Endothelial cell of umbilical vein (primary cell): ENCODE measurements at regions of chr11 and their contacts with region 1.

Region 1: DNA sequence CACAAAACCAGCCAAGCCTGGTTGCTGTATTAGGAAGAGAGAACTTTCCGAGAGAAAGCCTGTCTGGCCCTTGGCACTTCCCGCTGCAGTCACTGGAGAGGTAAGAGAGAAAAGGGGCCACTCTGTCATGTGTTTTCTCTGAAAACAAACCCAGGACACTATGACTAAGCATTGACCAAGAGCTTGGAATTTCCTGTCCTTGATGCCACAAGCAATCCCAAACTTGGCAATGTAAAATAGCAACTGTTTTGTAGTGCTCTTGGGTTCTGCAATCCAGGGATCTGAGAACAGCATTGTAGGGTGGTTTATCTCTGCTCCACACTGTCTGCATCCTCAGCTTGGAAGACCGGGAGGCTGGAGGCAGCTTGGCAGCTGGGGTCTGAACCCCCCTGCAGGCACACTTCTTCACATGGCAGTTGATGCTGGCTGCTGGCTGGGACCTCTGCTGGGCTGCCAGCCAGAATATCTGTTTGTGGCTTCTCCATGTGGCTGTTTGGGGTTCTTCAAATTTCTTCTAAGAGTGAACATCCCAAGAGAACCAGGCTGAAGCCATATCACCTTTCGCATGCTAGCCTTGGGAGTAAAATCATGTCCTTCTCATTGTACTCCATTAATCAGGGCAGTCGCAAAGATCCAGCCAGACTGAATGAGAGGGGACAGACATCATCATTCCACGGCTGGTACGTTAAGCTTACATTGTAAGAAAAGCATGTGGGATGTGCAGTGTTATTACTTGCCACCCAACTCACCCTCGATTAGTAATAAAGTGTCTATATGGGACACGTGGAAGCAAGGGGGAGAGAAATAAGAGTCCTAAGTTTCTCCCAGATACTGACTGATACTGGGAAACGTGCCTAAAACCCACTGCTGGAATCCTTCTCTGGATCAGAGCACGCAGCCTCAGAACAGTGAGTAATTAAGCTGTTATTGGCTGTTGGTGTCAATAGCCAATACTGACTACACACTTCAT is 537.4 kb upstream of the B3GAT1 start:
- DNase-seq: peak; percentile 91
- H3K4me3 ChIP-seq: no peak overlapping the region
- H3K27ac ChIP-seq: peak overlapping the region; percentile 89
- H3K4me1 ChIP-seq: peaks cover 27% of the 10 kb centered on the region
- H3K27me3 ChIP-seq: no peaks in the 10 kb centered on the region
- CTCF ChIP-seq: no peak
- POLR2A ChIP-seq: no peak

Region 2: DNA sequence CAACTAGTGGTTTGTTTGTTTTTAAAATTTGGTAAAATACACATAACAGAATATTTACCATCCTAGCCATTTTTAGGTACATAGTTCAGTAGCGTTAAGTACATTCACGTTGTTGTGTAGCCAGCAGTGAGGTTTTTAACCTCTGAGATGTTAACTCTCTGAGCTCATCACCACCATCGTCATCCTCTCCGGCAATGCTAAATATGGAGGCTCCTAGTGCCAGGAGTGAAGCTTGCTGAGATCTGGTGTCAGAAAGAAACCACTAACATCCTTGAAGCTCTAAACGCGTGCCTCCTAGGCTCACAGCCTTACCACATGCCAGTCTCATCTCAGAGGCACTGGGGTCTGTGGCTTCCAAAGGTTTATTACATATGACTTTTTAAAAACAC is 207.2 kb before region 1 on chr11:
- CTCF ChIA-PET with region 1: no interaction called
- POLR2A ChIA-PET with region 1: no interaction called
- dilution Hi-C with region 1: no loop called
- intact Hi-C with region 1: loop called (anchors 2 kb)
- DNase-seq: peak; percentile 4
- H3K4me3 ChIP-seq: no peak overlapping the region
- H3K27ac ChIP-seq: peak overlapping the region; percentile 61
- H3K4me1 ChIP-seq: peaks cover 25% of the 10 kb centered on the region
- H3K27me3 ChIP-seq: peaks cover 0 to 3% of the 10 kb centered on the region in 2 experiments
- CTCF ChIP-seq: no peak
- POLR2A ChIP-seq: no peak

Region 3: DNA sequence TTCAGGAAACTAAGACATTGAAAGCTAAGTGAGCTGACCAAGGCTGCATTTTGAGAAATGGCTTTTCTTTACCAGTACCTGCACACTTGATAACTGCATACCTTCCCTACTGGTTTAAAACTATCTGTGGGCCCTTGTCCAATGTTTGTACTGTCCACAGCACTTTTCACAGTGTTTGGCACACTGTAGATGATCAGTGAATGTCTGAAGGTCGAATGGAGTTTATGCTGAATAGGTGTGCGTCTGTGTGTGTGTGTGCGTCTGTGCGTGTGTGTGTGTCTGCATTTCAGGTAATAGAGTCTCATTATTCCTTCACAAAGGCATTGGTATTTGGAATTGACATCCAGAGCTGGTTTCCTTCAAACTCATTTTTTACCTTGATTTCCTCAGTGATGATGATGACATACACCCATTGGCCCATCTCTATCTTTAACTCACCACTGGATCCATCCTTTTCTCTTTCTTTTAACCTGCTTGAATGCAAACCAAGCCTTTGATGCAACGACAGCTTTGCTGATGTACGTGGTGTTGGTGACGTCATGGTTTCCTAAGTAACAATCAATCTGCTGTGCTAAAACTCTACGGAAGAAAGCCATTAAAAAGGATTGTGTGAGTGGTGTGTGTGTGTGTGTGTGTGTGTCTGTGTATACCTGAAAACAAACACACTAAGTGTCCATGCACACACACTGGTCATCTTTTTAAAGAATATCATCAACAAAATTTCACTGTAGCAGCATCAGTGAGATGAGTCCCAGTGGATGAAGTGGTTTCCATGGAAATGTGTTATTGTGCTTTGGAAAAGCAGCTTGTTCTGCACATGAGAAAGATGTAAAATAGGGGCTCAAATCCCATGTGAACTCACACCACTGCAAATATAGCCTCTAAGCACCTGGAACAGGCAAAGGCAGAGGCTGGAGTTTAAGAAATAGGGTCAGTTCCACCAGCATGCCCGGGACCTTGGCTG is 47.2 kb before region 1 on chr11:
- CTCF ChIA-PET with region 1: no interaction called
- POLR2A ChIA-PET with region 1: no interaction called
- dilution Hi-C with region 1: no loop called
- intact Hi-C with region 1: no loop called
- DNase-seq: no peak
- H3K4me3 ChIP-seq: no peak overlapping the region
- H3K27ac ChIP-seq: no peak overlapping the region
- H3K4me1 ChIP-seq: no peaks in the 10 kb centered on the region
- H3K27me3 ChIP-seq: no peaks in the 10 kb centered on the region
- CTCF ChIP-seq: no peak
- POLR2A ChIP-seq: no peak

Region 4: DNA sequence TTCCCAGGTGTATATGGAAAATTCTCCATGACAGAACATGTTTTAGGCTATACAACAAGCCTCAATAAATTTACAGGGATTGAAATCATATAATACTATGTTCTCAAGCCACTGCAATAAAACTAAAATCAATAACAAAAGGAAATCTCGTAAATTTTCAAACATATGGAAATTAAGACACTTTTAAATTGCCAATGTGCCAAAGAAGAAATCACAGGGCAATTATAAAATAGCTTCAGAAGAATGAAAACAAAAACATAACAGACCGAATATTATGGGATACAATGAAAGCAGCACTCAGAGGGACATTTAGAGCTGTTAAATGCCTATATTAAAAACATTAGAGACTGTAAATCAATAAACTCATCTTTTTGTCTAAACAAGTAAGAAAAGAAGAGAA is 18.3 kb after region 1 on chr11:
- CTCF ChIA-PET with region 1: no interaction called
- POLR2A ChIA-PET with region 1: no interaction called
- dilution Hi-C with region 1: no loop called
- intact Hi-C with region 1: no loop called
- DNase-seq: no peak
- H3K4me3 ChIP-seq: no peak overlapping the region
- H3K27ac ChIP-seq: no peak overlapping the region
- H3K4me1 ChIP-seq: no peaks in the 10 kb centered on the region
- H3K27me3 ChIP-seq: no peaks in the 10 kb centered on the region
- CTCF ChIP-seq: no peak
- POLR2A ChIP-seq: no peak

Region 5: DNA sequence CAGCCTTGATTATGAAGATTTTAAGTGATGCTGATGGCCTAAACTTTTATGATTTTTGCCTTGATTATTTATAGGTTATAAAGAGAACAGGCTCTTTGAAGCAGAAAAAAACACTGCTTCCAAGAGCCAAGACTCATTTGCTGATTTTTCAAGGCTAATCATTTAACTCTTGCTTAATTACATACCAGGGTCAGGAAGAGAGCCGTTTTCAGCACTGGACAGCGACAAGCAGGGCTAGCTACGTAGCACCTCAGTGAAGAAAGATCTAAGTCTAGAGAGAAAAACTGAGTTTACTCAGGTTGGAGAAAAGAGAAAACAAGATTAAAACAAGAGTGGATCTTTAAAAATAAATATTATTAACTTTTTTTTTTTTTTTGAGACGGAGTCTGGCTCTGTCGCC is 78.1 kb after region 1 on chr11:
- CTCF ChIA-PET with region 1: no interaction called
- POLR2A ChIA-PET with region 1: no interaction called
- dilution Hi-C with region 1: no loop called
- intact Hi-C with region 1: loop called (anchors 2 kb)
- DNase-seq: peak; percentile 38
- H3K4me3 ChIP-seq: no peak overlapping the region
- H3K27ac ChIP-seq: no peak overlapping the region
- H3K4me1 ChIP-seq: no peaks in the 10 kb centered on the region
- H3K27me3 ChIP-seq: no peaks in the 10 kb centered on the region
- CTCF ChIP-seq: no peak
- POLR2A ChIP-seq: no peak